CD8-positive, alpha-beta T cell (primary cell): ENCODE measurements at regions of chr7 and their contacts with region 1.

Region 1: DNA sequence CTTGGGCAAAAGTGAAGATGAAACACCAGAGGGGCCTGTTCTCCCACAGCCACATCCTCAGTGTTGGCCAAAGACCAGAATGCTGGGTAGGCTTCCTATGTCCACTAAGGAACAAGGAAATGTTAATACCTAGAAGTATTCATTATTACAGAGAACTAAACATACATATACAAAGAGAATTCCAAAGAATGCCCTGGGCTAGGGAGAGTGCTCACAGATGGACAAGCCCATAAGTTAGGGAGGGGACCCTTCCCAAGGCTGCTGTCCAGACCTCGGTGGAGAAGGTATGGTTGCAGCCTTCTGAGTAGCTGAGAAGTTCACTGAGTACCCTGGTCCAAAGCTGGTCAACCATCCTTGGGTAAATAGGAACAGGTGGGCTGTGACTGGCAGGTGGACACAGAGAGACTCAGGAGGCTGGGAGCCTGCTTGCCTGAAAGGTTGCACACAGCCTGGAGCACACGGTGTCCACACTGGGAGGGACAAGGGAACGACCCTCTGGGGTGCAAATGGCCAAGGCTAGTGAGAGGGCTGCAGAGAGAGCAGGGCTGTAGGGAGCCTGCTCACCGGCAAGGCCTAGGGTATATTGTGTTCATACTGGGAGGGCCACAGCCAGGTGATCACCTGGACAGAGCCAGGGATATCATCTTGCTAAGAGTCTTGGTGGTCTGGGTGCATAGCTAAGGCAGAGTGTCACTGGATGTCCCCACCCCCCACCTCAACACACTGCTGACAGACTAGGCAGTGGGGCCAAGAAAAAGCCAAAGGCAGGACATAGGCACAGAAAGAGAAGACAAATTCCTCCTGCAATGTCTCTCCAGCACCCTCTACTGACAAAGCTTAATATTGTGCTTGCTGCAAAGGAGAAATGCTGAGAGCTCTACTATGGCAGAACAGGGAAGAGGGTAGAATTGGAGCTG is 40.3 kb downstream of the CPVL start:
- DNase-seq: peak in 2 of 9 experiments; percentile 40 to 54
- ATAC-seq: no peak
- H3K4me3 ChIP-seq: no peak overlapping the region
- H3K4me3 Mint-ChIP-seq: no peak overlapping the region
- H3K27ac ChIP-seq: no peak overlapping the region
- H3K27ac Mint-ChIP-seq: no peak overlapping the region
- H3K4me1 ChIP-seq: no peaks in the 10 kb centered on the region
- H3K4me1 Mint-ChIP-seq: peaks cover 3% of the 10 kb centered on the region
- H3K27me3 ChIP-seq: no peaks in the 10 kb centered on the region
- H3K27me3 Mint-ChIP-seq: no peaks in the 10 kb centered on the region
- CTCF ChIP-seq: no peak

Region 2: GRCh38 chr7:29116361-29117200 is 10.6 kb after region 1 on chr7:
- CTCF ChIA-PET with region 1: interaction called, 11 read pairs
- POLR2A ChIA-PET with region 1: interaction called, 3 read pairs
- intact Hi-C with region 1: no loop called
- DNase-seq: no peak
- ATAC-seq: no peak
- H3K4me3 ChIP-seq: no peak overlapping the region
- H3K4me3 Mint-ChIP-seq: no peak overlapping the region
- H3K27ac ChIP-seq: no peak overlapping the region
- H3K27ac Mint-ChIP-seq: no peak overlapping the region
- H3K4me1 ChIP-seq: no peaks in the 10 kb centered on the region
- H3K4me1 Mint-ChIP-seq: peaks cover 6% of the 10 kb centered on the region
- H3K27me3 ChIP-seq: no peaks in the 10 kb centered on the region
- H3K27me3 Mint-ChIP-seq: peaks cover 4% of the 10 kb centered on the region
- CTCF ChIP-seq: no peak